Naive thymus-derived CD4-positive, alpha-beta T cell (primary cell): ENCODE measurements at regions of chr1 and their contacts with region 1.

Region 1: DNA sequence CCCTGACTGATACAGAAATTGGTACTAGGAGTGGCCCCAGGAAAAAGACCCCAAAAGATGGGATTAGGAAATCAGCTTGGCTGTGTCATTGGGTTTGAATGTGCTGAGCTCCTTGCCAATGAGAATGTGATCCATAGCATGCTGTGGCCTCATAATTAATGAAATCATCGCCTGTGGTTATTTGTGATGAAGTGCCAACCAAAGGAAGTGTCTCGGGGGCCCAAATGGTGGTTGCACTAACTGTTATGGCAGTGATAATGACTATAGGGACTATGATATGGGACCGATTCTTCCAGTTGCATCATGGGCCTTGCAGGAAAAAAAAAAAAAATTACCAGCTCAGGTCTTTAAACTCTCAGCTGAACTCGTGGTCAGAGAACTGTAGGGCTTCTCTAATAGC is 15.4 kb upstream of the ZDHHC18 start:
- DNase-seq: no peak
- ATAC-seq: no peak
- H3K4me3 ChIP-seq: no peak overlapping the region
- H3K4me3 Mint-ChIP-seq: peak overlapping the region in 1 of 10 donors; percentile 39
- H3K27ac ChIP-seq: no peak overlapping the region
- H3K27ac Mint-ChIP-seq: peak overlapping the region in 2 of 9 donors; percentile 32 to 92
- H3K4me1 ChIP-seq: peaks cover 0 to 14% of the 10 kb centered on the region in 2 donors
- H3K4me1 Mint-ChIP-seq: peaks cover 0 to 26% (median 8%) of the 10 kb centered on the region in 7 donors
- H3K27me3 ChIP-seq: no peaks in the 10 kb centered on the region
- H3K27me3 Mint-ChIP-seq: no peaks in the 10 kb centered on the region

Region 2: DNA sequence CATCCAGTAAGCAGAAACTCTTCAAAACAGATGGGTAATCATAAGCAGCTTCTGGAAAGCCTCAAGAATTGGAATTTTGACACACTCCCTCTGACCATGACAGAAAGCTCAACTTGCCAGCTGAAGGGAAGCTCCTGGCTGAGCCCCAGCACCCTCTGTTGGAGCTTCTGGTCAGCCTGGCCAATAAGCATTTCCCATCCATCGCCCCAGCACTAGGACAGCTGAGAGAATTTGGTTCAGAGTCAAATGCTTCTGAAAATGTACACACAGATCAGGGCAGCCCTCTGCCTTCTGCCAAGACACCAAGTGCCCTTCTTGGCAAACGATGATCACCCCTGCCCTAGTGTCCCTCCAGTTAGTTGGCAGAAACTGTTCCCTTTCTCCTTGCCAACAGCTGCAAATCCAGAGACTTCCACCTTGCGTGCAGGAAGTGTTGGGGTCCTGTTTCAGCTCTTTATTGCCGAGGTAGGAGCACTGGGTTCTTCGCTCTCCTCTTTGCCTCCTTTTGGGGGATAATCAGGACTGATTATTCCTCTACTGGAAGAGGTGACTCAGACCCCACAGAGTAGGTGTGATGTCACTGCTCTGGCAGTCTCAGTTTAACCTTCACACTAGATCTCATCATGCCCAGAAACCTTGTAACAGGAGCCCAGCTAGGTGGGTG is 11.4 kb before region 1 on chr1:
- CTCF ChIA-PET with region 1: interaction called, 29 read pairs
- POLR2A ChIA-PET with region 1: interaction called, 4 read pairs
- intact Hi-C with region 1: no loop called
- DNase-seq: no peak
- ATAC-seq: peak; percentile 18
- H3K4me3 ChIP-seq: no peak overlapping the region
- H3K4me3 Mint-ChIP-seq: peak overlapping the region in 6 of 10 donors; percentile 31 to 84 (median 66)
- H3K27ac ChIP-seq: peak overlapping the region; percentile 49
- H3K27ac Mint-ChIP-seq: peak overlapping the region; percentile 82 to 96 (median 92)
- H3K4me1 ChIP-seq: peaks cover 12 to 35% of the 10 kb centered on the region in 2 donors
- H3K4me1 Mint-ChIP-seq: peaks cover 19 to 56% (median 28%) of the 10 kb centered on the region in 7 donors
- H3K27me3 ChIP-seq: no peaks in the 10 kb centered on the region
- H3K27me3 Mint-ChIP-seq: no peaks in the 10 kb centered on the region

Region 3: GRCh38 chr1:26833432-26834405 is 22.7 kb after region 1 on chr1:
- CTCF ChIA-PET with region 1: interaction called, 27 read pairs
- POLR2A ChIA-PET with region 1: interaction called, 6 read pairs
- intact Hi-C with region 1: loop called (anchors 1 to 2 kb)
- DNase-seq: peak; percentile 59 to 95 (median 88)
- ATAC-seq: peak; percentile 97
- H3K4me3 ChIP-seq: peak overlapping the region; percentile 59
- H3K4me3 Mint-ChIP-seq: peak overlapping the region; percentile 69 to 87 (median 84)
- H3K27ac ChIP-seq: peak overlapping the region; percentile 99
- H3K27ac Mint-ChIP-seq: peak overlapping the region; percentile 95 to 100 (median 99)
- H3K4me1 ChIP-seq: peaks cover 49% of the 10 kb centered on the region in 2 donors
- H3K4me1 Mint-ChIP-seq: peaks cover 50 to 75% (median 64%) of the 10 kb centered on the region in 7 donors
- H3K27me3 ChIP-seq: no peaks in the 10 kb centered on the region
- H3K27me3 Mint-ChIP-seq: no peaks in the 10 kb centered on the region

Region 4: DNA sequence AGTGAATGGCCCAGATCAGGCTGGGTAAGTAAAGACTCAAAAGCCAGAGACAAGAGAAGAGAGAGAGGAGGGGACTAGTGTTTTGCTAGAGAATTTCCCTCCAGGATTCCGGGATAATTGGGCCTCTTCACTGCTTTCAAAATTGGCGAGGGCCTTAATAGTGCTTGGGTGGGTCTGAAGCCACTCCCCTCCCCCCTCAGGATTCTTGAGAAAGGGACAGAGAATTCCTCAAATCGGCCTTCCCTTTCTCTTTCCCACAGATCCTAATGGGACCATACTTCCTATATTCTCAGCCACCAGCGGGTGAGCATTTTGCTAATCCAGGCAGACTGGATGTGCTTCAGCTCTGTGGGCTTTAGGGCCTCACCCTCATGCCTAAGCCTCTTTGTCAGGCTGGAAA is 63.8 kb after region 1 on chr1:
- CTCF ChIA-PET with region 1: interaction called, 6 read pairs
- POLR2A ChIA-PET with region 1: no interaction called
- intact Hi-C with region 1: loop called (anchors 1 to 2 kb)
- DNase-seq: no peak
- ATAC-seq: no peak
- H3K4me3 ChIP-seq: no peak overlapping the region
- H3K4me3 Mint-ChIP-seq: no peak overlapping the region
- H3K27ac ChIP-seq: no peak overlapping the region
- H3K27ac Mint-ChIP-seq: no peak overlapping the region
- H3K4me1 ChIP-seq: no peaks in the 10 kb centered on the region
- H3K4me1 Mint-ChIP-seq: peaks cover 0 to 3% (median 0%) of the 10 kb centered on the region in 7 donors
- H3K27me3 ChIP-seq: no peaks in the 10 kb centered on the region
- H3K27me3 Mint-ChIP-seq: no peaks in the 10 kb centered on the region

Region 5: DNA sequence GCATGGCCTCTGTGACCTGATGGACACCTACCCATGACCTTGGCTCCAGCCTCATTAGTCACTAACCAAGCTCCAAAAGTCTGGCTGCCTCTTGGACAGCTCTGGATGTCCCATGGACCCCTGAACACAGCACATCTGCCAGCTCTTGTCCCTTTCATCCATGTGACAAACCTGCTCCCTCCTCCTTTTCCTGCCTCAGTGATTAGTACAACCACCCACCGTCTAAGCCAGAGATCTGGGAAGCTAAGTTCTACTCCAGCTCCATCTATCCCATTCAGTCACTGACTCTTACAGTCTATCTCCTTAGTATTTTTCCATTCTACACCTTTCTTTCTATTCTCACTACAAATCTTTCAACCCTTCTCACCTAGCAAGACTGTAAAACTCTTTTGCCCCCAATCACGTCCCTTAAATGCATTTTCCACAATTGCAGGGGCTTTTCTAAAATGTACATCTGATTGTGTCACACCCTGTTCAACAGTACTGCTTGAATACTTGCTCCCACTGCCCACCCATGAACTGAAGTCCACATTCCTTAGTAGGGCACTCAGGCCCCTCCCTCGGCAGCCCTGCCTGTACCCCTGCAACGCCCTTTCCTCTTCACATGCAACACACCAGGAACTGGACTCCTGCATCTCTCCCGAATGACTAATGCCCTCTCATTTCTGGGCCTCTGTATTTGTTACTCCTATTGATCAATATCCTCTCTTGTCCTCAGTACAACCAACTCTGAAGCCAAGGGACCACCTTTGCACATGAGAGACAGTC is 71.8 kb after region 1 on chr1:
- CTCF ChIA-PET with region 1: interaction called, 6 read pairs
- POLR2A ChIA-PET with region 1: no interaction called
- intact Hi-C with region 1: loop called (anchors 1 to 2 kb)
- DNase-seq: no peak
- ATAC-seq: no peak
- H3K4me3 ChIP-seq: no peak overlapping the region
- H3K4me3 Mint-ChIP-seq: no peak overlapping the region
- H3K27ac ChIP-seq: no peak overlapping the region
- H3K27ac Mint-ChIP-seq: peak overlapping the region in 4 of 9 donors; percentile 10 to 34 (median 13)
- H3K4me1 ChIP-seq: no peaks in the 10 kb centered on the region
- H3K4me1 Mint-ChIP-seq: peaks cover 6 to 17% (median 10%) of the 10 kb centered on the region in 7 donors
- H3K27me3 ChIP-seq: no peaks in the 10 kb centered on the region
- H3K27me3 Mint-ChIP-seq: no peaks in the 10 kb centered on the region

Region 6: DNA sequence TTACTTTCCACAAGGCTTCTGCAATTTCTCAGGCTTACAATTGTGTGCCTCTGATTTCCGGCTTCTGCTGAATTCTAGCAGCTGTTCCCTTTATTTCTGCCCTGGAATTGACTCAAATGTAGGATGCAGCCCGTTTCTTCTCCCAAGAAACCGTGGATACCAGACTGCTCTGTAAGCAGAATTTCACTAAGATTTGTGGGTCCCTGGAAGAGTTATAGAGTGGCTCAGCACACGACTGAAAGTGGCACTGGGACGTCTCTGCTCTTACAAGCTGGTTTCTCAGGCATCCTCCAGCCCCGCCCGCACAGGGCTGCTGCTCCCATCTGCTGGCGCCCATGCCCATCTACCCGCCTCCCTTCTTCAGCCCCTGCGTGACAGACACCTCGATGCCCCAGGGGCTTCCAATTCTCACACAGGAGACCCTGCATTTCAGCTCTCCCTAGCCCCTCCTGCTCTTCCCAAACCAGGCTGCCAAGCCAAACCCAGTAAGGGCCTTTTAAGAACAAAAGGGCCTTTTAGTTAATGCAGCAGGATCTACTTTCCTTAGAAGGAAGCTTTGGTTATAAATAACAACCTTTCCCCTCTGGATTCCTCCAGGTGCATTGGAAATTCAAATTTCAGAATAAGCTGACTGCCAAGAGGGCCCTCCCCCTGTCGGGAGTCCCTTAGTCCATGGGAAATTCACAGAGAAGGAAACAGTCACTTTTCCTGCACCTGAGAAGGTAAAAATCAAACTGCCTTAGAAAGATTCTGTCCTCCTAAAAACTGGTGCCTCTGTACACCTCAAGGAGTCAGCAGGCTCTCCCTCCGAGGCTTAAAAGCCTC is 247.0 kb after region 1 on chr1:
- CTCF ChIA-PET with region 1: no interaction called
- POLR2A ChIA-PET with region 1: no interaction called
- intact Hi-C with region 1: no loop called
- DNase-seq: no peak
- ATAC-seq: no peak
- H3K4me3 ChIP-seq: no peak overlapping the region
- H3K4me3 Mint-ChIP-seq: no peak overlapping the region
- H3K27ac ChIP-seq: no peak overlapping the region
- H3K27ac Mint-ChIP-seq: peak overlapping the region in 1 of 9 donors; percentile 36
- H3K4me1 ChIP-seq: no peaks in the 10 kb centered on the region
- H3K4me1 Mint-ChIP-seq: no peaks in the 10 kb centered on the region
- H3K27me3 ChIP-seq: no peaks in the 10 kb centered on the region
- H3K27me3 Mint-ChIP-seq: peaks cover 0 to 2% (median 0%) of the 10 kb centered on the region in 5 donors

Region 7: DNA sequence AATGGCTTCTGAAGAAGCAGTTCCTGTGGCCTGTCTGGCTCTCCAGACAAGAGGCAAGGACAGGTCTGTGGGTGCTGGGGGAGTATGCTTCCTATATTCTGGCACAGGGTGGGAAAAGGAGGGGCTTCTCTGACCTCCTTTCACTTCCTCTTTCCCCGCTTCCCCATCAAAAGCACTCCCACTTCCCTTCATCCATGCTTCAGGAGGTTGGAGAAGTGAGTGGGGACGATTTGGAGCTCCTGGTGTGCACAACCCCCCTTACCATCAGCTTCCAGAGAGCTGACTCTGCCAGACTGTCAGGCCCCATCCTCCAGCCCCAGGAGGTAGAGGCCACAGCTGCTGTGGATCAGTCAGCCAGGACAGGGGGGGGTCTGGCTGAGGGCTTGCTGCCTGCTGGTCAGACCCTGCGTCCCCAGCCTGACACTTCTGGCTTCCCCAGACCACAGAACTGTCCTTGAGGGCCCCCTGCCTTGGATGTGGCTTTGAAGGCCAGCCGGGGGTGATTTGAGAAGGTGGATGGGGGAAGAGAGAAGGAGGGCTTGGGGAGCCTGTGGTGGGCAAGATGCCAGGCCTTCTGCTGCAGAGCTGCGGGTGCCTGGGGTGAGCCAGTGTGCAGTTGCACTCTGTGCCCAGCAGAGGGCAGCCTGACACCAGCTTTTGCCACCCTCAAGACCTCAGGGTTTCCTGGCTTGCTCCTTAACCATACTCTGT is 489.4 kb after region 1 on chr1:
- CTCF ChIA-PET with region 1: no interaction called
- POLR2A ChIA-PET with region 1: no interaction called
- intact Hi-C with region 1: no loop called
- DNase-seq: peak; percentile 66 to 84 (median 76)
- ATAC-seq: peak; percentile 95
- H3K4me3 ChIP-seq: no peak overlapping the region
- H3K4me3 Mint-ChIP-seq: no peak overlapping the region
- H3K27ac ChIP-seq: no peak overlapping the region
- H3K27ac Mint-ChIP-seq: no peak overlapping the region
- H3K4me1 ChIP-seq: no peaks in the 10 kb centered on the region
- H3K4me1 Mint-ChIP-seq: peaks cover 0 to 9% (median 3%) of the 10 kb centered on the region in 7 donors
- H3K27me3 ChIP-seq: no peaks in the 10 kb centered on the region
- H3K27me3 Mint-ChIP-seq: no peaks in the 10 kb centered on the region